B cell (primary cell): ENCODE measurements at regions of chrX and their contacts with region 1.

Region 1: GRCh38 chrX:112841114-112841819 is 636 bp upstream of the AMOT start:
- DNase-seq: peak; percentile 87
- ATAC-seq: peak; percentile 93
- H3K4me3 ChIP-seq: peak overlapping the region; percentile 64 to 76 (median 73)
- H3K4me3 Mint-ChIP-seq: peak overlapping the region; percentile 86
- H3K27ac ChIP-seq: peak overlapping the region; percentile 45 to 55
- H3K27ac Mint-ChIP-seq: peak overlapping the region; percentile 82
- H3K4me1 ChIP-seq: peaks cover 0 to 12% of the 10 kb centered on the region in 2 donors
- H3K4me1 Mint-ChIP-seq: peaks cover 11% of the 10 kb centered on the region
- H3K27me3 ChIP-seq: no peaks in the 10 kb centered on the region
- H3K27me3 Mint-ChIP-seq: no peaks in the 10 kb centered on the region
- CTCF ChIP-seq: no peak

Region 2: DNA sequence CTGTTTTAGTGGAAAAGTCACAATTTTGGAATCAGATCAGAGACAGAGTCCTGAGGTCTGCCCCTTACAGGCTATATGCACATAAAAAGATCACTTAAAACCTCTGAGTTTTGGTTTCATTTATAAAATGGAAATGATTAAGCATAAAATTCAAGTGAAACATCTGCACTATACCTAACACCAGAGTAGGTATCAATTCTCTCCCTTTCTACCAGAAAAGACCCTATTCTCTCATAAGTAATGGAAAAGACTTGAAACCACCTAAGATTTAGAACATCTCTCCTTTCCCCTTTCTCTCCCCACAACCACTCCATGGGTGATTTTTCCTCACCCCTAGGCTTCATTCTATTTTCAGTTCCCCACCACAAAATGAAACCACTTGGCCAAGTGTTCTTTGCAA is 162.4 kb before region 1 on chrX:
- CTCF ChIA-PET with region 1: no interaction called
- POLR2A ChIA-PET with region 1: no interaction called
- intact Hi-C with region 1: loop called (anchors 5 kb)
- DNase-seq: peak; percentile 13
- ATAC-seq: no peak
- H3K4me3 ChIP-seq: no peak overlapping the region
- H3K4me3 Mint-ChIP-seq: peak overlapping the region; percentile 84
- H3K27ac ChIP-seq: no peak overlapping the region
- H3K27ac Mint-ChIP-seq: peak overlapping the region; percentile 86
- H3K4me1 ChIP-seq: peaks cover 8 to 18% of the 10 kb centered on the region in 2 donors
- H3K4me1 Mint-ChIP-seq: peaks cover 16% of the 10 kb centered on the region
- H3K27me3 ChIP-seq: no peaks in the 10 kb centered on the region
- H3K27me3 Mint-ChIP-seq: no peaks in the 10 kb centered on the region
- CTCF ChIP-seq: no peak

Region 3: DNA sequence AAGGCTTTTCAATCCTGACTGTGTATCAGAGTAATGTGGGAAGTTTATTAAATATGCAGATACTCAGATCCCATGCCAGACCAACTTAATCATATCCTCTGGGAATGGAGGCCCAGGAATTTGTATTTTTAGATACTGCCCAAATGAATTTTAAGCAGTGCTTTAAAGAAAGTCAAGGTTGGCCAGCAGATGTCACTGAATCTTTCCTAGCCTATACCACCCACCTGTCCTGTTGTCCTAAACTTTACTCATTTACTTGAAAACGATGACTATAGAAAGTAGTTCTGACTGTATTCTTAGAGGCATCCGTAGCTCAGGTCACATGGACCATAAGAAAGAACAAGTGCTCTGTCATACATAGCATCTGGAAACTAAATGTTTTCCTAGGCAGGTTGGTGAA is 80.6 kb before region 1 on chrX:
- CTCF ChIA-PET with region 1: no interaction called
- POLR2A ChIA-PET with region 1: no interaction called
- intact Hi-C with region 1: loop called (anchors 5 kb)
- DNase-seq: peak; percentile 2
- ATAC-seq: no peak
- H3K4me3 ChIP-seq: no peak overlapping the region
- H3K4me3 Mint-ChIP-seq: no peak overlapping the region
- H3K27ac ChIP-seq: no peak overlapping the region
- H3K27ac Mint-ChIP-seq: peak overlapping the region; percentile 41
- H3K4me1 ChIP-seq: peaks cover 18 to 25% of the 10 kb centered on the region in 2 donors
- H3K4me1 Mint-ChIP-seq: peaks cover 17% of the 10 kb centered on the region
- H3K27me3 ChIP-seq: no peaks in the 10 kb centered on the region
- H3K27me3 Mint-ChIP-seq: no peaks in the 10 kb centered on the region
- CTCF ChIP-seq: no peak